Activated CD4-positive, alpha-beta T cell treated with anti-CD3 and anti-CD28 coated beads, Interleukin-2, amount 10 ng/mL, durations not matched to agents 24 days and 14 days (primary cell): ENCODE measurements at regions of chr16 and their contacts with region 1.

Region 1: DNA sequence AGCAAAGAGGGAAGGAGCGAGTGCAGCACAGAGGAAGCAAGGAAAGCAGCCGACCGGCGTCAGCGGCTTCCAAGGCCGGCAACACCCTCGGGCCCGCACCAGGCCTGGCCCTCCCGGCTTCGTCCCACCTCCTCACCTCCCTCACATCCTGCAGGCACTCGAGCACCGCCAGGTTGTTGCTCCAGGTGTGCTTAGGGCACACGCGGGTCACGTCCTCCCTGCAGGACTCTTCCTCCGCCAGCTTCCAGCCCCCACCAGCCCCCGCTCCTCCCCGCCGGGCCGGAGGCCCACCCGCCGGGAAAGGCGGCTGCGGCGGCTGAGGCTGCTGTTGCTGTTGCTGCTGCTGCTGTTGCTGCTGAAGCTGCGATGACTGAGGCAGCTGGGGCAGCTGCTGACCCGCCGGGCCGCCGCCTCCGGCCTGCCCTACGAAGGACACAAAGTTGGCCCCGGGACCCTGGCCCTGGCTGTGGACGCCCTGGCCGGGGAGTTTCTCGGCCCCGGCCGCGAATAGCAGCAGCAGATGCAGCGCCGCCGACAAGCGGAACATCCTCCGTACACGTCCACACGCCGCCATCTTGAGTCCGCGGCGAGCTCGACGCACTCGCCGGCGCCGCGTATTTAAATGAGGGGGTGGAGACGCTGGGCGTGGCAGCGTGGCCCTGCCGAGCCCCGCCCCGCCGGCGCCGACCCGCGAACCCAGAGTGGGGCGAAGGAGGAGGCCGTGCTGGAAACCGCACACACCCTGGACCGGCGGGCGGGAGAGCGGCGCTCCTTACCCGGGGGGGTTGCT is at the start of gene GLG1:
- DNase-seq: peak; percentile 98
- H3K4me3 Mint-ChIP-seq: peak within 1 kb of the TSS; percentile 87
- H3K27ac Mint-ChIP-seq: peak within 1 kb of the TSS; percentile 84
- H3K4me1 Mint-ChIP-seq: peaks cover 53% of the 10 kb centered on the region
- H3K27me3 Mint-ChIP-seq: no peaks in the 10 kb centered on the region
- total RNA-seq, gene GLG1: 64.1 and 64.7 TPM in 2 replicates

Region 2: GRCh38 chr16:74296432-74297144 is 310.1 kb before region 1 on chr16 and contains the start of gene PSMD7:
- intact Hi-C with region 1: loop called (anchors 5 kb)
- DNase-seq: peak; percentile 97
- H3K4me3 Mint-ChIP-seq: peak within 1 kb of the TSS; percentile 89
- H3K27ac Mint-ChIP-seq: peak within 1 kb of the TSS; percentile 89
- H3K4me1 Mint-ChIP-seq: peaks cover 18% of the 10 kb centered on the region
- H3K27me3 Mint-ChIP-seq: no peaks in the 10 kb centered on the region
- total RNA-seq, gene PSMD7: 174 and 178 TPM in 2 replicates

Region 3: GRCh38 chr16:74372953-74373846 is 233.5 kb before region 1 on chr16:
- intact Hi-C with region 1: loop called (anchors 10 kb)
- DNase-seq: peak; percentile 63
- H3K4me3 Mint-ChIP-seq: no peak overlapping the region
- H3K27ac Mint-ChIP-seq: no peak overlapping the region
- H3K4me1 Mint-ChIP-seq: peaks cover 1% of the 10 kb centered on the region
- H3K27me3 Mint-ChIP-seq: no peaks in the 10 kb centered on the region

Region 4: DNA sequence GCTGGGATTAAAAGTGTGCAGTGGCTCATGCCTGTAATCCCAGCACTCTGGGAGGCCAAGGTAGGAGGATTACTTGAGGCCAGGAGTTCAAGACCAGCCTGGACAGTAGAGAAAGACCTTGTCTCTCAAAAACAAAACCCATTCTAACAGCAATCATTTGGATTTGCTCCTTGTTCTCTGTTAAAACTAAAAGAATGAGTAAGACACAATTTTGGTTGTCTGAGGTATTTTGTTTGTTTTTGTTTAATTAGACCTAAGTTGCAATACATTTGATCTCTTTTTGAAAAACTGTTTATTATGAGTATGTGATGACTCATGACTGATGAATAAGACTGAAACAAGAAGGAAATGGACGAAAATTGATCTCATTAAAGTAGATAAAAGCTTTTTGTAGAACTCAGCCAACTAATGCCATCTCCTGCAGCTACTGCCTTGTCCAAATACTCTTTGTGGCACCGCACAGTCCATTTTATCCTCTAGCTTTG is 28.8 kb before region 1 on chr16:
- intact Hi-C with region 1: loop called (anchors 1 kb)
- DNase-seq: no peak
- H3K4me3 Mint-ChIP-seq: peak overlapping the region; percentile 8
- H3K27ac Mint-ChIP-seq: peak overlapping the region; percentile 66
- H3K4me1 Mint-ChIP-seq: peaks cover 33% of the 10 kb centered on the region
- H3K27me3 Mint-ChIP-seq: no peaks in the 10 kb centered on the region

Region 5: GRCh38 chr16:74616782-74617181 is 10.1 kb after region 1 on chr16:
- intact Hi-C with region 1: no loop called
- DNase-seq: no peak
- H3K4me3 Mint-ChIP-seq: no peak overlapping the region
- H3K27ac Mint-ChIP-seq: no peak overlapping the region
- H3K4me1 Mint-ChIP-seq: peaks cover 11% of the 10 kb centered on the region
- H3K27me3 Mint-ChIP-seq: no peaks in the 10 kb centered on the region

Region 6: DNA sequence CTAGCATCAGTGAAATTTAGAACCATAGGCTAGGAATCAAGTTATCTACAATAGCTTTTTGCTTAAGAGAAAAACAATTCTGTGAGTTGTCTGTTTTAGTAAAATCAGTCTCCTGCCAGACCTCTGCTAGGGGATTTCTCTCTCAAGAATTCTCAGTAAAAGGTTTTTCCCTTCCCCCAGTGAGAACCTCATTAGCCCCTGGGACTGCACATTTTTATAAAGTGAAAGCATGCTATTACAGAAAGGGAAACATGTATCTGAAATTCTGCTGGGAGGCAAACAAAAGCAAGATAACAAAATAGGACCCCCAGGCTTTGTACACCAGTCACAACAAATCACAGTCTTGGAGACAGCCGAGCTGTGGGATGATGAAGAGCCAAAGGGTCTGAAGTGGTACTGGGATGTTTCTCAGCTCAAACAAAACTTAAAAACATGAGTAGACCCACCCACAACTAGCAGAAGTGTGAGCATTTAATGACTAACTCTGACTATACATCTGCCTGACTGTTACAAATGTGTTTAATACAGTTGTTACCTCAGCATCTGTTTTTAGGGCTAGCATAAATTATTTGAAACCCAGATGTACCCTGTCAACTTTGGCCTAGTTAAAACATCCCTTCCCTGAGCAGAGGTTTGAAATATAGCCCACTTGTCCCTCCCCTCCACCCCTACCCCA is 20.2 kb after region 1 on chr16:
- intact Hi-C with region 1: loop called (anchors 1 kb)
- DNase-seq: no peak
- H3K4me3 Mint-ChIP-seq: peak overlapping the region; percentile 32
- H3K27ac Mint-ChIP-seq: peak overlapping the region; percentile 91
- H3K4me1 Mint-ChIP-seq: peaks cover 28% of the 10 kb centered on the region
- H3K27me3 Mint-ChIP-seq: no peaks in the 10 kb centered on the region